HCT116 (cell line): ENCODE measurements at regions of chr7 and their contacts with region 1.

Region 1: DNA sequence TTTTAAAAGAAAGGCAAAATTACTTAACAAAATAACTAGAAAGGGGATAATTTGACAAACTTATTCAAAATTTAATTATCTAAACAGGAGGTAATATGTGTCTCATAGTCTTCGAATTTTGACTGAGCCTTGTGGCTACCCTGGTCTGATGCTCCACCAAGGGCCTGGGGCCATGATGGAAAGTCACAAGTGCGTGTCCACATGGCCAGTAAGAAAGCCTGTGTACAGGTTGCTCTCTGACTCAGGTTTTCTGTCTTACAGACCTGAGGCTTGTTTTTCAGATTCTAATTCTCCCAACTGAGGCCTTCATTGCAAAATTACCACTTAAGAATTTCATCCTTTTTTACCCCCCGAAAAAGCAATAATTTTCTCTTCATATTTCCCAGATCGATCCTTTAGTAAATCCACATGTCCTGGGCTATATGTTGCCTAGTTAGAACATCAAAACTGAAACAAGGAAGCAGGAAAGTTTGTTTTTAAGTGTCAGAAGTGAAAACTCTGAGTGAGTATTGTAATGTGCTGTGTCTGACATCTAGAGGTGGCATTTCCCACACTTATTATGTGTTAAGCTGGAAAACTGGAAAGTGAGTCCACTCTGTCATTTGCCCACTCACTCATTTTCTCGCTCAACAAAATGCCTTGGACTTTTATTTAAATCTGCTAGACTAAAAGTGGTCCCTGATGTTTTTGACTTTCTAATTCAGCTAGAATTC is 10.0 kb downstream of the CYP3A43 start:
- DNase-seq: no peak
- ATAC-seq: no peak
- H3K4me3 ChIP-seq: no peak overlapping the region
- H3K27ac ChIP-seq: no peak overlapping the region
- H3K4me1 ChIP-seq: no peaks in the 10 kb centered on the region
- H3K27me3 ChIP-seq: peaks cover 3% of the 10 kb centered on the region; the same call in 1 of the 2 replicates
- CTCF ChIP-seq: peak in 2 of 3 experiments; percentile 19 to 45; a peak in 2 of 6 replicates
- POLR2A ChIP-seq: no peak
- RAD21 ChIP-seq: peak; percentile 66

Region 2: DNA sequence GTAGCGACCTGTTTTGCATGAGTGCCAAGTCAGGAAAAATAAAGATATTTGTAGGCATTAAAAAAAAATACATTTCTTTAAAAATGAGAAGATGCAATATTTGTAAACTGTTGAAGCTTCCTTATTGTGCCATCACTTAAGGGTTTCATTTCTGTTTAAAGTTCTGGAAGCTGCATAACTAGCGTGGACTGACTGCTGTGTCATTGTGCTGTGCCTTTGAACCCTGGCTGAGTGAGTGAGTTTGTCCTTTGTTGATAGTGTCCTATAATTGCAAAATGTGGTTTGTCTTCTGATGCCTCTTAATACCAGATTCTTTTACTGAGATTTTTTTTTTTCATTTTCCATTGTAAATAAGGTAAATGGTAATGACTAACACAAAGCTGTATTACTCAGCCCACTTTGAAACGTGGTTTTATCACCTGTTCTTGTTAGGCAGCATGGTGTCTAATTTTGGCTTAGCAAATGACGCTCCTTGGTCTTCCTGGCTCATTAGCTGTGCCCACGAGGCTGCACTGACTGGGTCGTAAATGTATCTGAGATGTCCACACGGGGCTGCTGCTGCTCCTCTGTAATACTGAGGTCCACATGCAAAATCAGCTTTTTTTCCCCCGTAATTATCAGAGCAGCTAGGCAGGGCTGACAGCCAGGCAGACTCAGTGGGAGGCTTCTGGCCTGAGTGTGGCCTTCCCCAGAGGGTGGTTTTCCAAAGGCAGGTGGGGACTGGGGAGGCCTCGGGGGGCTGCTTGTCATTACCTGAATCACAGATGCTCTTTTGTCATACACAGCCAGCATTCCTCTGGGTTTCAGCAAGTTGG is 206.3 kb before region 1 on chr7:
- CTCF ChIA-PET with region 1: no interaction called
- POLR2A ChIA-PET with region 1: no interaction called
- RAD21 ChIA-PET with region 1: no interaction called
- intact Hi-C with region 1: loop called (anchors 10 kb)
- DNase-seq: no peak
- ATAC-seq: peak; percentile 54; the same call in 1 of the 2 replicates
- H3K4me3 ChIP-seq: no peak overlapping the region
- H3K27ac ChIP-seq: no peak overlapping the region
- H3K4me1 ChIP-seq: no peaks in the 10 kb centered on the region
- H3K27me3 ChIP-seq: no peaks in the 10 kb centered on the region
- CTCF ChIP-seq: peak in 2 of 3 experiments; percentile 21 to 26; a peak in 3 of 6 replicates
- POLR2A ChIP-seq: no peak
- RAD21 ChIP-seq: peak; percentile 67

Region 3: GRCh38 chr7:99788554-99788953 is 49.3 kb before region 1 on chr7:
- CTCF ChIA-PET with region 1: no interaction called
- POLR2A ChIA-PET with region 1: no interaction called
- RAD21 ChIA-PET with region 1: no interaction called
- intact Hi-C with region 1: no loop called
- DNase-seq: no peak
- ATAC-seq: no peak
- H3K4me3 ChIP-seq: no peak overlapping the region
- H3K27ac ChIP-seq: no peak overlapping the region
- H3K4me1 ChIP-seq: no peaks in the 10 kb centered on the region
- H3K27me3 ChIP-seq: peaks cover 14% of the 10 kb centered on the region
- CTCF ChIP-seq: no peak
- POLR2A ChIP-seq: no peak
- RAD21 ChIP-seq: no peak